Left colon (tissue), 2 donors: ENCODE measurements at regions of chr2 and their contacts with region 1.

Region 1: GRCh38 chr2:235135990-235136561 is 184.3 kb downstream of the SH3BP4 start:
- DNase-seq: peak; percentile 79 to 91
- ATAC-seq: peak; percentile 98

Region 2: DNA sequence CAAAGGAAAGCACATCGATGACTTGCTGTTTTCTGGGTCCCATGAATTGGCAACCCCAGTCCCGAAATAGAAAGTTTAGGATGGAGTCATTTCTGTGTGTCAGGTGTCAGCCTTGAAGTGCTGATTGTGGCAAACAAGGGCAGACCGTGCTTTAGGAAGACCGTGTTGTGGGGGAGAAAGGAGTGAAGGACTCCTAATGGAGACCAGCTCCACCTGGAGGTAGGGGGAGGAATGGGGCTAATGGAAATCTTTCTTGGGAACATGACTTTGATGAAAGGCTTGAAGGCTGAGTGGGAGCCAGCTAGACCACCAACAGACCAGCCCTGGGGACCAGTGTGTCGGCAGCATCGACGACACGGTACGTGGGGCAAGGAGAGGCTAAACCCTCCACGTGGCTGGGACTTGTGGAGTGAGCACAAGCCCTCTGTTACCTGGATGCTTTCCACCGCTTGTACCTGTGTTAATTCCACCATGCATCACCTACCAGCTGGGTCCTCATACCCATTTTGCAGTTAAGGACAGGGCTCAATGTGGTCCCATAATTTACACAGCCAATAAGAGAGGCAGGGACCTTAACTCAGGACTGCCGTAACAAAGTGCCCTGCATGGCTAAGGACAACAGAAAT is 80.1 kb before region 1 on chr2:
- intact Hi-C with region 1: no loop called
- DNase-seq: peak in 1 of 2 donors; percentile 48
- ATAC-seq: peak; percentile 51

Region 3: DNA sequence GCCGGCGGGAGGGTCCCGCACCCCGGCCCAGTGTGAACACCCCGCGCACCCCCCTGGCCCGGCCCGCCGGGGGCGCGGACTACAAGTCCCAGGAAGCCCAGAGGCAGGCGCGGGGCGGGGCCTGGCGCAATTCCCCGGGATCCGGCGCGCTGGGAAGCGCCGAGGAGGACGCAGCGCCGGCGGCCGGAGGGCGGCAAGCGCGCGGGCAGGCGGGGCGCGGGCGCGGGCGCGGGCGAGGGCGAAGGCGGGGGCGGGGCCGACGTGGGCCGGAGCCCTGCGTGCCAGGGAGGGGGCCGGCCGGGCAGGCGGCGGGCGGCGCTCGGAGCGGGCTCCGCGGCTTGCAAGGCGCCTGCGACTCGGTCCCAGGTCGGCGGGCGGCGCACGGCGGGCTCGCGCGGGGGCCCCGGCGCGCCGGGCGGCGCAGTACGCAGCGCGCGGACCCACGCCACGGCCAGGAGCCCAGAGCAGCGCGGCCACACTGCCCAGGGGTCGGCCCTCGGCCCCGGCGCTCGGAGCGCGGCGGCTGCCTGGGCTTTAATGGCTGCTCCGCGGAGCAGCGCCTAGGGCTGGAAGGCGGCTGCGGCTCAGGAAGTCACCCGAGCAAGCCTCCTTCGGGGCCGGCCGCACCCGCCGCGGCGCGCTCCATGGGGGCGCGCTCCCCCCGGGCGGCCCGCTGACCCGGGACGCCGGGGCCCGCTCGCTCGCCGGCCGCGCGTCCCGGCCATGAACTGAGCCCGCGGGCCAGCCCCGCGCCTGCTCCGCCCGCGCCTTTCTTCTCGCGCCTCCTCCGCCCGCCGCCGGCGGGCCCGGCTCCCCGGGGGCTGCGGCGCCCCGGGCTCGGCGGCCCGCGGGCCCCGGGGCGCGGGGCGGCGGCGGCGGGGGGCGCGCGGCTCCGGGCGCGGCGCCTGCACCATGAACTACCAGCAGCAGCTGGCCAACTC is 358.0 kb after region 1 on chr2 and contains the start of gene AGAP1:
- intact Hi-C with region 1: loop called in 1 of 2 experiments (anchors 10 kb)
- DNase-seq: peak; percentile 87 to 90
- ATAC-seq: peak; percentile 83
- total RNA-seq, gene AGAP1: 61.3 to 78.5 TPM

Region 4: DNA sequence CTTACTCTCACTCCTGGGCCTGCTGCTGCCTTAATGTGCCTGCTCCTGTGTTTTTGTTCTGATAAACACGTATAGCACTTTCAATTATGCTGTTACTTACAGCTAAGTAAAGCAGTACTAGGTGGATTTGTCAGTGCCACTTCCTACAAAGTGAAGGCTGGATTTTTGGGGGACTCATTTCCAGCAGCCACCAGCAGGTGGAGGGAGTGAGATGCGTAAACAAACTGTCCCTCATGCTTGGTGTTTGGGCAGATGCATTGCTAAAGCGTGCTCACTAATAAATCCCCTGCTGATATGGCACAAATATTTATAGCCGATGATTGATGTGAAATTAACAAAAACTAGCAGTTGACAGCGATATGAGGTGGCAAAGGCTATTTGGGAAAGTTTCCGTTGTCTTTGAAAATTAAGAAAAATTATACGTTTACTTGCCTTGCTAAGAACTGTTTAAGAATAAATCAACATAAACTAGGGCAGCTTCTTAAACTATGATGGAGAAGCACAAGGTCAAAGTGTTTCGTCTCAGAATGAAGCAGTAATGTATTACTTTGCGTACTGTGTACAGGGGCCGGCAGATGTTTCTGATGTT is 459.4 kb after region 1 on chr2:
- intact Hi-C with region 1: loop called in 1 of 2 experiments (anchors 10 kb)
- DNase-seq: peak; percentile 52 to 72
- ATAC-seq: peak; percentile 66